Caco-2 (cell line): ENCODE measurements at regions of chr4 and their contacts with region 1.

Region 1: GRCh38 chr4:138576684-138577083 is 334.5 kb upstream of the SLC7A11 start:
- DNase-seq: peak in 1 of 2 experiments; percentile 33
- H3K4me3 ChIP-seq: no peak overlapping the region
- H3K4me3 Mint-ChIP-seq: no peak overlapping the region
- H3K27ac Mint-ChIP-seq: no peak overlapping the region
- H3K4me1 ChIP-seq: no peaks in the 10 kb centered on the region
- H3K4me1 Mint-ChIP-seq: no peaks in the 10 kb centered on the region
- H3K27me3 ChIP-seq: no peaks in the 10 kb centered on the region
- H3K27me3 Mint-ChIP-seq: no peaks in the 10 kb centered on the region
- CTCF ChIP-seq: peak; percentile 47 to 63

Region 2: GRCh38 chr4:138035781-138036258 is 540.9 kb before region 1 on chr4:
- CTCF ChIA-PET with region 1: no interaction called
- POLR2A ChIA-PET with region 1: no interaction called
- intact Hi-C with region 1: loop called (anchors 5 kb)
- DNase-seq: peak in 1 of 2 experiments; percentile 56
- H3K4me3 ChIP-seq: no peak overlapping the region
- H3K4me3 Mint-ChIP-seq: no peak overlapping the region
- H3K27ac Mint-ChIP-seq: no peak overlapping the region
- H3K4me1 ChIP-seq: no peaks in the 10 kb centered on the region
- H3K4me1 Mint-ChIP-seq: peaks cover under 1% of the 10 kb centered on the region
- H3K27me3 ChIP-seq: no peaks in the 10 kb centered on the region
- H3K27me3 Mint-ChIP-seq: no peaks in the 10 kb centered on the region
- CTCF ChIP-seq: peak; percentile 58 to 67

Region 3: DNA sequence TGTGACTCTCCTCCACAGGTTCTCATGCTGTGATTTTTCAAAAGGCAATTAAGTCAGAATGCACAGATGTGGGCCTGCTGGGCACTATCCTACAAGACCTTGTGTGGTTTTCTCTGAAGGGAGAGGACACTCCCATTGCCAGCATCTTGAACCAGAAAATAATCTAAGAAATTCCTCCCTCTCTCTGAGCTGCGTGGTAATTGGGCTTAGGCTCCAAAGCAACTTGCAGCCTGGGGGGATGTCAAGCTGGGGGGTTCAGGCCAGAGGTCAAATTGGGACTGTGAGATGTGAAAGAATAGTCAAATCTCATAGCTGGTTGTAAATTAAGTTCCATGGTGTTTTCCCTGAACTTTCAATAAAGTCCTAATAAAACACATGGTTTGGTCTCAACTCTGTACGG is 16.1 kb after region 1 on chr4:
- CTCF ChIA-PET with region 1: no interaction called
- POLR2A ChIA-PET with region 1: no interaction called
- intact Hi-C with region 1: no loop called
- DNase-seq: no peak
- H3K4me3 ChIP-seq: no peak overlapping the region
- H3K4me3 Mint-ChIP-seq: no peak overlapping the region
- H3K27ac Mint-ChIP-seq: no peak overlapping the region
- H3K4me1 ChIP-seq: no peaks in the 10 kb centered on the region
- H3K4me1 Mint-ChIP-seq: no peaks in the 10 kb centered on the region
- H3K27me3 ChIP-seq: no peaks in the 10 kb centered on the region
- H3K27me3 Mint-ChIP-seq: peaks cover 6% of the 10 kb centered on the region
- CTCF ChIP-seq: no peak